ENCODE measurements at regions of chr12 and their contacts with region 1.

Region 1: GRCh38 chr12:120649442-120650232 is 9.2 kb downstream of the CABP1 start:
- DNase-seq: peak in 3 of 5 donors; percentile 23 to 74 (median 61)
- ATAC-seq: peak in 2 of 4 donors; percentile 0 to 3
- H3K4me3 ChIP-seq: peak overlapping the region in 11 of 12 donors; percentile 32 to 61 (median 47)
- H3K27ac ChIP-seq: peak overlapping the region; percentile 31 to 85 (median 68)
- H3K4me1 ChIP-seq: peaks cover 0 to 62% (median 35%) of the 10 kb centered on the region in 12 donors
- H3K27me3 ChIP-seq: peaks cover 0 to 17% (median 4%) of the 10 kb centered on the region in 9 donors
- CTCF ChIP-seq: peak in 2 of 12 donors; percentile 9 to 25
- POLR2A ChIP-seq: no peak

Region 2: GRCh38 chr12:120437754-120438494 is 211.7 kb before region 1 on chr12 and contains the start of gene COX6A1:
- intact Hi-C with region 1: loop called in 1 of 10 experiments (anchors 2 kb)
- DNase-seq: peak; percentile 93 to 98 (median 96)
- ATAC-seq: peak; percentile 96 to 99 (median 98)
- H3K4me3 ChIP-seq: peak within 1 kb of the TSS; percentile 62 to 97 (median 83)
- H3K27ac ChIP-seq: peak within 1 kb of the TSS; percentile 76 to 92 (median 88)
- H3K4me1 ChIP-seq: peaks cover 0 to 23% (median 16%) of the 10 kb centered on the region in 12 donors
- H3K27me3 ChIP-seq: no peaks in the 10 kb centered on the region
- CTCF ChIP-seq: peak in 1 of 12 donors; percentile 2
- POLR2A ChIP-seq: peak in 1 of 2 donors; percentile 47
- total RNA-seq, gene COX6A1: 117 to 318 (median 172) TPM

Region 3: DNA sequence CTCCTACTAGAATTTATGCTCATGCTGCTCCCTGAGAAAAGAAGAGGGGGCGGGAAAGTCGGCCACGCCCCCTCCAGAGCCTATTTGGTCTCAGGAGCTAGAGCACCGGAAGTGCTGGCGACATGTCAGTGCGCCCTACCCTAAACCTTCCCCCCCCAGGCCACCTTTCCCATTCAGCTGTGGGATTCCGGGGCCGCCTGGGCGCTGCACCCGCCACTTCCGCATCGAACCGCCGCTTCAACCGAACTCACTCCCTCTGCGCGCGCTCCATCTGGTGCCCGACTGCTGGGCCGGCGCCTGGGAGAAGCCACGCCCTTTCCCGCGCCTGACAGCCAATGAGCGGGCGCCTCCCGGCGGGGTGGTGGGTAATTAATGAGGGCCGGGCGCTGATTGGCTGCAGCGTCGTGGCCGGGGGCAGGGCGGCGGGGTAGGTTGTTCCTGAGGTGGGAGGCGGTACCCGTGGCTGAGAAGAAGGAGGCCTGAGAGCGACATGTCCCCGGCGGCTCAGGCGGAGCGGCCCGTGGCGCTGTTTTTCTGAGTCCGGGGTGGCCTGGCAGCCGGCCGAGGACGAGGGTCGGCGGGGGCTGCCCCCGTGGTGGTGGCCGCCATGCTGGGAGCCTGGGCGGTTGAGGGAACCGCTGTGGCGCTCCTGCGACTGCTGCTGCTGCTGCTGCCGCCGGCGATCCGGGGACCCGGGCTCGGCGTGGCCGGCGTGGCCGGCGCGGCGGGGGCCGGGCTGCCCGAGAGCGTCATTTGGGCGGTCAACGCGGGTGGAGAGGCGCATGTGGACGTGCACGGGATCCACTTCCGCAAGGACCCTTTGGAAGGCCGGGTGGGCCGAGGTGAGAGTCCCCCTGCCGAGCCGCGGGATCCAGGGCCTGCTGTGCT is 37.3 kb after region 1 on chr12 and contains the start of gene MLEC:
- intact Hi-C with region 1: loop called in 8 of 10 experiments (anchors 2 to 5 kb)
- DNase-seq: peak; percentile 99
- ATAC-seq: peak; percentile 89 to 95 (median 94)
- H3K4me3 ChIP-seq: peak within 1 kb of the TSS; percentile 68 to 98 (median 90)
- H3K27ac ChIP-seq: peak within 1 kb of the TSS; percentile 84 to 97 (median 94)
- H3K4me1 ChIP-seq: peaks cover 0 to 59% (median 46%) of the 10 kb centered on the region in 12 donors
- H3K27me3 ChIP-seq: no peaks in the 10 kb centered on the region
- CTCF ChIP-seq: peak in 9 of 12 donors; percentile 4 to 43 (median 13)
- POLR2A ChIP-seq: peak in 1 of 2 donors; percentile 98
- total RNA-seq, gene MLEC: 91.0 to 150 (median 117) TPM

Region 4: GRCh38 chr12:120710031-120710804 is 60.6 kb after region 1 on chr12 and contains the start of gene UNC119B:
- intact Hi-C with region 1: loop called (anchors 1 to 2 kb)
- DNase-seq: peak; percentile 71 to 89 (median 82)
- ATAC-seq: peak; percentile 47 to 95 (median 90)
- H3K4me3 ChIP-seq: peak within 1 kb of the TSS; percentile 54 to 99 (median 82)
- H3K27ac ChIP-seq: peak within 1 kb of the TSS; percentile 70 to 95 (median 90)
- H3K4me1 ChIP-seq: peaks cover 4 to 35% (median 27%) of the 10 kb centered on the region in 12 donors
- H3K27me3 ChIP-seq: no peaks in the 10 kb centered on the region
- CTCF ChIP-seq: no peak
- POLR2A ChIP-seq: no peak
- total RNA-seq, gene UNC119B: 9.1 to 12.6 (median 10.7) TPM

Region 5: GRCh38 chr12:120978296-120979219 is 328.9 kb after region 1 on chr12 and contains the start of gene HNF1A:
- intact Hi-C with region 1: loop called in 8 of 10 experiments (anchors 2 to 5 kb)
- DNase-seq: no peak
- ATAC-seq: no peak
- H3K4me3 ChIP-seq: no peak within 1 kb of the TSS
- H3K27ac ChIP-seq: peak within 1 kb of the TSS in 1 of 12 donors; percentile 49
- H3K4me1 ChIP-seq: no peaks in the 10 kb centered on the region
- H3K27me3 ChIP-seq: no peaks in the 10 kb centered on the region
- CTCF ChIP-seq: no peak
- POLR2A ChIP-seq: no peak
- total RNA-seq, gene HNF1A: not detected

Region 6: DNA sequence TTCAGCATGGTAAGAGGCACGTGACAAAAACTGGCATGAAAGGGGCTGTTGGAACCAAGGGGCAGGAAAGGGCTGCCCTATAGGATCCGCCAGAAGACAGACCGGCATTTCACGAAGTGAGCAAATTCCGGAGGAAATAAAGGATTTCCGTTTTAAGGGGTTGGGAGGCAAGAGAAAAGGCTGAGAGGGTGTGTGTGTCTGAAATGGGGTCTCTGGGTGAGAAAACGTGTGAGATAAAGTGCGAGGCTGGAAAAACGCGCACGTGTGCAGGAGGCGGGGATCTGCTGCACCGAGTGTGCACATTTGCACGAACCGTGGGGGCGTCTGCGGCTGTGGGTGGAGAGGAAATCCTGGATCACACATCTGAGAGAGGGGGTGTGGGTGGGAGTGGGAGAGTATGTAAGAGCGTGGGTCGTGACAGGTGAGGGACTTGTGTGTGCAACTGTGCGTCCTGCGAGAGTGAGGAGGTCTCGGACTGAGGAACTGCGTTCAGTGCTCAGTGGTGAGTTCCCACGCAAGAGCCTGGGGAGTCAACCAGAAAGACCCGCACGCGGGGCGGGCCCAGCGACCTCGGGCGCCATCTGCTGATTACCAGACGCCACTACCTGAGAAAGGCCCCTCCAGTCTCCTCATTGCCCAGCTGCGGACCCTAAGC is 446.0 kb after region 1 on chr12:
- intact Hi-C with region 1: loop called in 3 of 10 experiments (anchors 5 to 10 kb)
- DNase-seq: peak; percentile 51 to 89 (median 72)
- ATAC-seq: peak; percentile 58 to 94 (median 88)
- H3K4me3 ChIP-seq: peak overlapping the region in 10 of 12 donors; percentile 28 to 55 (median 42)
- H3K27ac ChIP-seq: peak overlapping the region in 1 of 12 donors; percentile 46
- H3K4me1 ChIP-seq: peaks cover 0 to 20% (median 9%) of the 10 kb centered on the region in 12 donors
- H3K27me3 ChIP-seq: no peaks in the 10 kb centered on the region
- CTCF ChIP-seq: peak; percentile 75 to 92 (median 85)
- POLR2A ChIP-seq: no peak

Measured in heart left ventricle (tissue), 16 donors.